HEK293 (cell line): ENCODE measurements at regions of chr16 and their contacts with region 1.

Region 1: GRCh38 chr16:27639561-27640276 is 89.8 kb downstream of the KATNIP start:
- H3K4me3 ChIP-seq: no peak overlapping the region
- H3K27ac ChIP-seq: no peak overlapping the region
- H3K4me1 ChIP-seq: no peaks in the 10 kb centered on the region
- CTCF ChIP-seq: peak; percentile 33; the same call in 1 of the 2 replicates

Region 2: GRCh38 chr16:27628241-27628942 is 11.3 kb before region 1 on chr16:
- CTCF ChIA-PET with region 1: interaction called, 29 read pairs
- POLR2A ChIA-PET with region 1: no interaction called
- H3K4me3 ChIP-seq: no peak overlapping the region
- H3K27ac ChIP-seq: no peak overlapping the region
- H3K4me1 ChIP-seq: peaks cover 14% of the 10 kb centered on the region
- CTCF ChIP-seq: no peak

Region 3: DNA sequence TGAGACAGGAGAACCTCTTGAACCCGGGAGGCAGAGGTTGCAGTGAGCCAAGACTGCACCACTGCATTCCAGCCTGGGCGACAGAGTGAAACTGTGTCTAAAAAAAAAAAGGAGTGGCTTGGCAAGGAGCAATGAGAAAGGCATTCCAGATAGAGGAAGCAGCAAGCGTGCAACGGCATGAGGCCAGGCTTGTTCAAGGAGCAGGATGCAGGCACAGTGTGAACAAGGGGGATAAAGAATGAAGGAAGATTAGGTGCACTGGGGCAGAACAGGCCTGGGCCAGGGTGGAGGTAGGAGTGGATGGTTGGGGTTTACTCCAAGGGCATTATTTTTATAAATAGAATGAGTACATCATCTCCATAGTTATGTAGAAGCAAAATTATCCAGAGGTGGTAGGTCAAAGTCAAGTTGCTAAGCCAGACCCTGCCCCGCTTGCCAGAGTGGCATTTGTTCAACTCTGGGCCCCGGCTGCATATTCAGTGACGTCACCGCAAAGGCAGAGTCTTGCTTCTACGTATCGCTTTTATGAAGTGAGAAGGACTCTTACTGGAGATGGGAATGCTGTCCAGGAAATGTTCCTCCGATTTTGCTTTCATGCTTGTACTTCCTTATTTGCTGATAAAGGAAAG is 10.5 kb after region 1 on chr16:
- CTCF ChIA-PET with region 1: interaction called, 10 read pairs
- POLR2A ChIA-PET with region 1: no interaction called
- H3K4me3 ChIP-seq: no peak overlapping the region
- H3K27ac ChIP-seq: no peak overlapping the region
- H3K4me1 ChIP-seq: no peaks in the 10 kb centered on the region
- CTCF ChIP-seq: no peak

Region 4: GRCh38 chr16:27657811-27658210 is 18.1 kb after region 1 on chr16:
- CTCF ChIA-PET with region 1: interaction called, 15 read pairs
- POLR2A ChIA-PET with region 1: no interaction called
- H3K4me3 ChIP-seq: no peak overlapping the region
- H3K27ac ChIP-seq: no peak overlapping the region
- H3K4me1 ChIP-seq: no peaks in the 10 kb centered on the region
- CTCF ChIP-seq: no peak

Region 5: DNA sequence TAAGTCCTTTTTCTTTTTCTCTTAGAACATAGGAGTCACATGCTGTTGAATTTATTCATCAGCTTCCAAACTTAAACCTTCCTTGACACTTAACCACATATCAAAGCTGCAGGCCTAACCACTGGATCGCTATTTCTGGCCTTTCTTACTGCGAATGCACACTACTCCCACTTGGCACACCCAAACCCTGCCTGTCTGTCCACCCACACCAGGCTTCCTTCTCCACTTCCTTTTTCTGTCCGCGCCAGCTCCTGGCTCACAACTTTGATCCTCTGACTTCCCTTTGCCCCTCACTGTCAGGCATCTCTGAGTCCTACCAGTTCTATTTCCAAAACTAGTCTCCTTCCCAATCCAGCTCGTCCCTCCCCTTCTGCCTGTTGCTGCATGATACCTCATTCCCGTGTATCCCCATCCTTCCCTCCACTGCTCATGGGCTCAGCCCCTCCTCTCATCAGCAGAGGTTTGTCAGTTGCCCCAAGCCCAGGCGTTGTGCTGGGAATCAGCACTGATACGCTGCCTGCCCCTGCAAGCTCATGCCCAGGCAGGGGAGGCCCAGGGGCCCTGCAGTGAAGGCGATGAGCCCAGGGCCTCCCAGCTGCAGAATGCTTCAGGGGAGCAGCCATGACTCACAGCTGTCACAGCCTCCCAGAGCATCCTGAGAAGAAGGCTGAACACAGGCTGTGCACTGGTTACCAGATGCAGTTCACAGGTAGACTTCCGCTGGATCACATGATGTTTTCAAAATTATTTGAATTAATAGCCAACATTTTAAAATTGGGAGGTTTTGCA is 90.0 kb after region 1 on chr16:
- CTCF ChIA-PET with region 1: no interaction called
- POLR2A ChIA-PET with region 1: no interaction called
- H3K4me3 ChIP-seq: no peak overlapping the region
- H3K27ac ChIP-seq: no peak overlapping the region
- H3K4me1 ChIP-seq: no peaks in the 10 kb centered on the region
- CTCF ChIP-seq: no peak

Region 6: GRCh38 chr16:27867122-27868110 is 227.7 kb after region 1 on chr16:
- CTCF ChIA-PET with region 1: interaction called, 13 read pairs
- POLR2A ChIA-PET with region 1: interaction called, 10 read pairs
- H3K4me3 ChIP-seq: no peak overlapping the region
- H3K27ac ChIP-seq: no peak overlapping the region
- H3K4me1 ChIP-seq: no peaks in the 10 kb centered on the region
- CTCF ChIP-seq: no peak